K562 (cell line): ENCODE measurements at regions of chr1 and their contacts with region 1.

Region 1: DNA sequence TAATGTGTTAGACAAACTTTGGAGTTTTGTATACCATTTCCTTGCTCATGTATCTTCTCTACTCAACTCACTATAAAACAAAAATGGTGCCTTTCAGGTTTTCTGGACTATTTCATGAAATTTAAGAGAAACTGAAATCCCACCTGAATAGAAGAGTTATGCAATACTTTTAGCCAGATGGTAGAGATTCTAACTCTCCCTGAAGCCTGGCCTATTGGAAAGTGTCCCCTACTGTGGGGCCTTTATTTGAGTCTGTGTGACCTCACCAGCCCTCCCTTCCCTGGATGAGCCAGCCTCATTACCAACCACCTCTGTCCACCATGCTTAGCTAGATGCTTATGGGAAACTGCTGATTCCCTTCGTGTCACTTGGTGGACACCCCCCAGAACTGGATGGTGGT is 35.5 kb downstream of the TBX19 start:
- DNase-seq: no peak
- ATAC-seq: no peak
- H3K4me3 ChIP-seq: no peak overlapping the region
- H3K27ac ChIP-seq: no peak overlapping the region
- H3K4me1 ChIP-seq: peaks cover 3 to 6% of the 10 kb centered on the region in 2 experiments; a peak in 4 of 5 replicates
- H3K27me3 ChIP-seq: no peaks in the 10 kb centered on the region
- CTCF ChIP-seq: no peak
- EP300 ChIP-seq: no peak
- POLR2A ChIP-seq: no peak
- RAD21 ChIP-seq: no peak

Region 2: DNA sequence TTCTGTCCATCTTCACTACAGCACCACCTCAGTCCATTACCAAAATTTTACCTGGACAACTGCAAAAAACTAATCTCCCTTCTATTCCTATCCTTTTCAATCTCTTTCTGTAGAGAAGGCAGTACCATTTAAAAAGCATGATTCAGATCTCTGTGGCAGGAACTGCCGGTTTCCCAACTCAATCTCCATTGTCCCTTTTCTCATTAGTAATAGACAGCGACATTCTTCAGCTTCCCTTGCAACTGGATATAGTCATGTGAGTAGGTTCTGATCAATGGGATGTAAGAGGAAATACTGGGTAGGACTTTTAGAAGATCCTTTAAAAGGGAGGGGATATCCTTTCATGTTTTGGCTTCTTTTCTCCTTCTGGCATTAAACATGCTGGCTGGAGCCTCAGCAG is 477.1 kb before region 1 on chr1:
- CTCF ChIA-PET with region 1: no interaction called
- POLR2A ChIA-PET with region 1: no interaction called
- in situ Hi-C with region 1: no loop called
- intact Hi-C with region 1: no loop called
- DNase-seq: no peak
- ATAC-seq: no peak
- H3K4me3 ChIP-seq: no peak overlapping the region
- H3K27ac ChIP-seq: no peak overlapping the region
- H3K4me1 ChIP-seq: peaks cover 8 to 26% of the 10 kb centered on the region in 2 experiments; a peak in 4 of 5 replicates
- H3K27me3 ChIP-seq: no peaks in the 10 kb centered on the region
- CTCF ChIP-seq: no peak
- EP300 ChIP-seq: no peak
- POLR2A ChIP-seq: no peak
- RAD21 ChIP-seq: no peak

Region 3: DNA sequence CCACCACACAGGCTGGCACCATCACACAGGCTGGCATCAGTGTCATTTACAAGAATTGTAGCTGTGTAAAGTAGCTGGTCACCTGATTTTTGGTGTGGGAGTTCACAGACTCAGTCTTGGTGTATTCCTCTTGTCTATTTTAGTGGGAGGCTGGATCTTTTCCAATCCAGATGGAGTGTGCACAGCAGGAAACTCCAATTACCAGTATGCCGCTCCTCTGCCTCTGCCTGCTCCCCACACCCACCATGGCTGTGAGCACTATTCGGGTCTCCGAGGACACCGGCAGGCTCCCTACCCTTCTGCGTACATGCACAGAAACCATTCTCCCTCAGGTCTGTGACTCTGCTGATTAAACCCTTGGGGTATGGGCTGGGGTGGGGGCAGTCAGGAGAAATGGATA is 11.3 kb before region 1 on chr1:
- CTCF ChIA-PET with region 1: no interaction called
- POLR2A ChIA-PET with region 1: interaction called, 11 read pairs
- in situ Hi-C with region 1: no loop called
- intact Hi-C with region 1: no loop called
- DNase-seq: no peak
- ATAC-seq: no peak
- H3K4me3 ChIP-seq: no peak overlapping the region
- H3K27ac ChIP-seq: no peak overlapping the region
- H3K4me1 ChIP-seq: no peaks in the 10 kb centered on the region; a peak in 2 of 5 replicates
- H3K27me3 ChIP-seq: no peaks in the 10 kb centered on the region
- CTCF ChIP-seq: no peak
- EP300 ChIP-seq: no peak
- POLR2A ChIP-seq: no peak
- RAD21 ChIP-seq: no peak

Region 4: GRCh38 chr1:169072945-169073730 is 757.0 kb after region 1 on chr1:
- CTCF ChIA-PET with region 1: no interaction called
- POLR2A ChIA-PET with region 1: no interaction called
- in situ Hi-C with region 1: no loop called
- intact Hi-C with region 1: no loop called
- DNase-seq: no peak
- ATAC-seq: no peak
- H3K4me3 ChIP-seq: no peak overlapping the region
- H3K27ac ChIP-seq: no peak overlapping the region
- H3K4me1 ChIP-seq: no peaks in the 10 kb centered on the region
- H3K27me3 ChIP-seq: no peaks in the 10 kb centered on the region
- CTCF ChIP-seq: no peak
- EP300 ChIP-seq: no peak
- POLR2A ChIP-seq: no peak
- RAD21 ChIP-seq: no peak